CD14-positive monocyte (primary cell): ENCODE measurements at regions of chr17 and their contacts with region 1.

Region 1: DNA sequence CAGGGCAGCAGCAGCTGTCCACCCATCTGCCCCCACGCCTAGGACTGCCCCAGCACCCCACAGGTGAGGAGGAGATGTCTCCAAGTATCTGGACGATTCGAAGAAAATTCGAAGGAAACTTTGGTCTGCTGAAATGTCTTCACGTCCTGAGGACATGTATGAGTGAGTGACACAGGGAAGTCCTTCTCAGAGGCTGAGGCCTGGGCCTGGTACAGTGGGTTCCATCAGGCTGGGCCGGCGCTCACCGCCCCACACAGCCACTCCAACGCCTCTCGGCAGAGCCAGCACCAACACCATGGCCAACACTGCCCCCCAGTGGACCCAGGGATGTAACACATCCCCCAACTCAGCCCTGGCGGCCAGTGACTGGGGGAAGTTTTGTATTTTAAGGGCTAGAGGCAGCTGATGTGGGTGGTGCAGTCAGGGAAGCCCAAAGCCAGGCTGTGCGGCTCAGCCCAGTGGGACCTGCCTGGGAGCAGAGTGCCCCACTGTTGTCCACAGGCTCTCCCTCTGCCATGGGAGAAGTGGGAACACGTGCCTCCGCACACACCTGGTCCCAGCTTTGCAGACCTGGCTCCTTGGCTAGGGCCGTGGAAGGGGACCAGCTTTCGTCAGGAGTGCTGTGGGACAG is 55.8 kb upstream of the FASN start:
- DNase-seq: peak; percentile 62 to 73 (median 69)
- H3K4me3 ChIP-seq: no peak overlapping the region
- H3K4me3 Mint-ChIP-seq: no peak overlapping the region
- H3K27ac ChIP-seq: no peak overlapping the region
- H3K27ac Mint-ChIP-seq: no peak overlapping the region
- H3K4me1 ChIP-seq: no peaks in the 10 kb centered on the region
- H3K4me1 Mint-ChIP-seq: no peaks in the 10 kb centered on the region
- H3K27me3 ChIP-seq: no peaks in the 10 kb centered on the region
- H3K27me3 Mint-ChIP-seq: no peaks in the 10 kb centered on the region
- CTCF ChIP-seq: peak; percentile 95

Region 2: GRCh38 chr17:81959362-81960129 is 194.3 kb before region 1 on chr17:
- intact Hi-C with region 1: loop called in 1 of 2 experiments (anchors 5 kb)
- DNase-seq: peak; percentile 62 to 83 (median 66)
- H3K4me3 ChIP-seq: peak overlapping the region in 2 of 3 experiments; percentile 14 to 70
- H3K4me3 Mint-ChIP-seq: peak overlapping the region; percentile 60 to 82
- H3K27ac ChIP-seq: no peak overlapping the region
- H3K27ac Mint-ChIP-seq: no peak overlapping the region
- H3K4me1 ChIP-seq: peaks cover 10 to 19% of the 10 kb centered on the region in 2 donors
- H3K4me1 Mint-ChIP-seq: peaks cover 5% of the 10 kb centered on the region
- H3K27me3 ChIP-seq: peaks cover 22 to 52% of the 10 kb centered on the region in 2 donors
- H3K27me3 Mint-ChIP-seq: peaks cover 38 to 67% (median 46%) of the 10 kb centered on the region in 3 donors
- CTCF ChIP-seq: peak; percentile 92

Region 3: DNA sequence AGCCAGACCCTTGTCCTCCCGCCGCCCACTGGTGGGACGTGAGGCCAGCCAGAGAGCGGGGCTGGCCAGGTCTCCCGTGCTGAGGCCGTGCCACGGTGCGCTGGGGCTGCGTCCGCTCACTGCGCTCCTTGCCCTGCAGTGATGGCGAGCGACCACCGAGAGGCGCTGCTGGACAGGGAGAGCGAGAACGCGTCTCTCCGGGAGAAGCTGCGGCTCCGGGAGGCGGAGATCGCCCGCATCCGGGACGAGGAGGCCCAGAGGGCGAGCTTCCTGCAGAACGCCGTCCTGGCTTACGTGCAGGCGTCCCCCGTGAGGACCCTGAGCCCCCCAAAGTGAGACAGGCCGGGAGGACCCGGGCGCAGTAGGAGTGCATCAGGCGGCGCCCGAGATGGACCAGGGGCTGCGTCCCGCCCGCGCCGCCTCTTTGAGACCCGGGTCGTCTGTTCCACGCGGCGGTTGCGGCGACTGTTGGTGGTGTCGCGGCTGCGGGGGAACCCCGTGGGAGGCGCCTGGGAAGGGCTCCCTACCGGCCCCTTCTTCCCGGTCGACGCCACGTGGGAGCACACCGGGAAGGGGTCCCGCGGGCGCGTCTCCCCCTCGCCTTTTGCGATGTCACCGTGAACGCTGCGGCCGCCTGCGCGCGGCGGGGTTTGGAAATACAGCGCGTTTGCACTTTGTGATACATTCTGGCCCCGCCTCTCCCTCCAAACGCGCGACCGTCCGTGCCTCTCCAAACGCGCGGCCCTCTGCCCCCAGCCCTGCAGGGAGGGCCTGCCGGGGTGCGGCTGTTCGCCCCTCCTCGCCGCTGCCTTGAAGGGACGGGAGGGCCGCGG is 123.2 kb before region 1 on chr17:
- intact Hi-C with region 1: loop called (anchors 2 kb)
- DNase-seq: peak; percentile 68 to 76 (median 73)
- H3K4me3 ChIP-seq: peak overlapping the region; percentile 30 to 76 (median 34)
- H3K4me3 Mint-ChIP-seq: peak overlapping the region; percentile 82 to 90
- H3K27ac ChIP-seq: no peak overlapping the region
- H3K27ac Mint-ChIP-seq: peak overlapping the region in 1 of 7 donors; percentile 50
- H3K4me1 ChIP-seq: peaks cover 18 to 33% of the 10 kb centered on the region in 2 donors
- H3K4me1 Mint-ChIP-seq: peaks cover 13% of the 10 kb centered on the region
- H3K27me3 ChIP-seq: peaks cover 6 to 10% of the 10 kb centered on the region in 2 donors
- H3K27me3 Mint-ChIP-seq: peaks cover 11 to 25% (median 13%) of the 10 kb centered on the region in 3 donors
- CTCF ChIP-seq: peak; percentile 99